ENCODE measurements at regions of chr14 and their contacts with region 1.

Region 1: DNA sequence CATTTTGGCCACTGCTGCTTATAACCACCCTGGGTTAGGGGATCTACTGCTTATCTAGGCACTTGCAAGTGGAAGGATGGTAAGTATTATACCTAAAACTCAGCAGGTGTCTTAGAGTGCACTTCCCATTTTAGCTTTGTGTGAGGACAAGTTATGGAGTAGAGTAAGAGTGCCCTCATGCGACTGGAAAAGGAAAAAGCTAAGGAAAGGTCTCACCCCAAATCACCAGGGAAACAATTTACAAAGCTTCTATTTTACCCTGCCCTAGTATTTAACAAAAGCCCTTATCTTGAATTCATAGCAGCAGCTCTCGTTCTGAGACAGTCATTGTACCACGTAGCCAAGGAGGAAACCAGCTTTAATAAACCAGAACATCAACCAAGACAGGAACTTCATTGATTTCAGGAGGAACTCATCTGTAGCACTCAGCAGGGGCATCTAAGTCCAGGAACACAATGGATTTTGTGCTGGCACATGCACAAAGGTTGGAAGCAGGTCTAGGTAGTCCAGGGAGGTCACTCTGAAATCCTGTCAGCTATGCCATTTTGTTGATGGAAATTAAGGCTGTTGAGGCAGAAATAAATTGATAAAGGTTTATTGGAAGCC is 2.9 kb downstream of the RDH12 start:
- DNase-seq: peak; percentile 79
- ATAC-seq: peak; percentile 88
- H3K4me3 ChIP-seq: no peak overlapping the region
- H3K27ac ChIP-seq: no peak overlapping the region
- H3K4me1 ChIP-seq: peaks cover 8% of the 10 kb centered on the region; the same call in 1 of the 2 replicates
- H3K27me3 ChIP-seq: no peaks in the 10 kb centered on the region
- CTCF ChIP-seq: peak; percentile 91

Region 2: GRCh38 chr14:67426983-67427606 is 277.5 kb before region 1 on chr14:
- CTCF ChIA-PET with region 1: interaction called, 12 read pairs
- POLR2A ChIA-PET with region 1: no interaction called
- intact Hi-C with region 1: loop called (anchors 1 kb)
- DNase-seq: peak; percentile 87
- ATAC-seq: peak; percentile 86
- H3K4me3 ChIP-seq: no peak overlapping the region
- H3K27ac ChIP-seq: no peak overlapping the region
- H3K4me1 ChIP-seq: peaks cover 8% of the 10 kb centered on the region
- H3K27me3 ChIP-seq: 0 out of 2 replicates have a peak, but pooled peaks cover under 1% of the 10 kb centered on the region
- CTCF ChIP-seq: peak; percentile 87

Region 3: DNA sequence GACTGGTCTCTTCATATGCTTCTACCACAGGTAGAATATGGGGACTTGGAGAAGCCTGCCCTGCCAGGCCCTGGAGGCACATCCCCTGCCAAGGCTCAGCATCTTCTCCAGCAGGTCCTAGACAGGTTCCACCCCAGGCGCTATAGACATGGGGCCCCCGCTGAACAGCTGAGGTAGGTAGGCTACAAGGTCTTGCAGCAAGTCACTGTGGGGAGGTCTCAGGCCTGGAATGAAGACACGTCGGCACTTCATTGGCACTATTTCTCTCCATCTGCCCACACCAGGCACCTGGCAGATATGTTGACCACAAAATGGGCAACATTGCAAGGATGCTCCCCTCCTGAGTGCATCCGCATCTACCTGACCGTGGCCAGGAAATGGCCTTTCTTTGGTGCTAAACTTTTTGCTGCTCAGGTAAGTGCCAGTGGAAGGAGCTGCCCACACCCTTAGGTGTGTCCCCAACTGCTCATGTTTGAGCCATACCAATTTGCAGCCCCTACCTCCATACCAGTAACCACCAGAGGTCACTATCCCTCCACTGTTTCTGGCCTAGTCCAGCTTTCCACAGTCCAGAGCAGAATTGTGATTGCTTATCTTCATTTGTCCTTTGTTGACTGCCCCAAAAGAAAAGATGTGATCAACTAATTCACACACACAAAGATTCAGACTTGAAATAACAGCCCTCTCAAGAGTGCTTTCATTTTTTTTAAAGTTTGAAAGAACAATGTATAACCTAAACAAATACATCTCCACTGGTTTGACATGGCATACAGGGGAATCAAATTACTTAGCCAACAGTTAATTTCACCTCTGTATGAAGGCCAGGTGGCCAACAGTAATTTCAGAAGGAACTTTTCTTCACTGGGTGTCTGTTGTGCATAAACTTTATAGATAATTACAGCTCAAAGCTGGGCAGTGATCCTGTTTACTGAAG is 120.6 kb before region 1 on chr14:
- CTCF ChIA-PET with region 1: interaction called, 68 read pairs
- POLR2A ChIA-PET with region 1: no interaction called
- intact Hi-C with region 1: loop called (anchors 1 kb)
- DNase-seq: peak; percentile 72
- ATAC-seq: peak; percentile 99
- H3K4me3 ChIP-seq: no peak overlapping the region
- H3K27ac ChIP-seq: no peak overlapping the region
- H3K4me1 ChIP-seq: no peaks in the 10 kb centered on the region
- H3K27me3 ChIP-seq: no peaks in the 10 kb centered on the region
- CTCF ChIP-seq: peak; percentile 93

Region 4: GRCh38 chr14:67619446-67620216 is 85.0 kb before region 1 on chr14 and contains the start of gene ARG2:
- CTCF ChIA-PET with region 1: interaction called, 70 read pairs
- POLR2A ChIA-PET with region 1: interaction called, 3 read pairs
- intact Hi-C with region 1: loop called (anchors 1 kb)
- DNase-seq: peak; percentile 95
- ATAC-seq: peak; percentile 84
- H3K4me3 ChIP-seq: peak within 1 kb of the TSS; percentile 77
- H3K27ac ChIP-seq: no peak within 1 kb of the TSS
- H3K4me1 ChIP-seq: peaks cover 31% of the 10 kb centered on the region
- H3K27me3 ChIP-seq: no peaks in the 10 kb centered on the region
- CTCF ChIP-seq: peak; percentile 32; the same call in 1 of the 2 replicates
- total RNA-seq, gene ARG2: 1.1 and 1.7 TPM in 2 replicates

Region 5: DNA sequence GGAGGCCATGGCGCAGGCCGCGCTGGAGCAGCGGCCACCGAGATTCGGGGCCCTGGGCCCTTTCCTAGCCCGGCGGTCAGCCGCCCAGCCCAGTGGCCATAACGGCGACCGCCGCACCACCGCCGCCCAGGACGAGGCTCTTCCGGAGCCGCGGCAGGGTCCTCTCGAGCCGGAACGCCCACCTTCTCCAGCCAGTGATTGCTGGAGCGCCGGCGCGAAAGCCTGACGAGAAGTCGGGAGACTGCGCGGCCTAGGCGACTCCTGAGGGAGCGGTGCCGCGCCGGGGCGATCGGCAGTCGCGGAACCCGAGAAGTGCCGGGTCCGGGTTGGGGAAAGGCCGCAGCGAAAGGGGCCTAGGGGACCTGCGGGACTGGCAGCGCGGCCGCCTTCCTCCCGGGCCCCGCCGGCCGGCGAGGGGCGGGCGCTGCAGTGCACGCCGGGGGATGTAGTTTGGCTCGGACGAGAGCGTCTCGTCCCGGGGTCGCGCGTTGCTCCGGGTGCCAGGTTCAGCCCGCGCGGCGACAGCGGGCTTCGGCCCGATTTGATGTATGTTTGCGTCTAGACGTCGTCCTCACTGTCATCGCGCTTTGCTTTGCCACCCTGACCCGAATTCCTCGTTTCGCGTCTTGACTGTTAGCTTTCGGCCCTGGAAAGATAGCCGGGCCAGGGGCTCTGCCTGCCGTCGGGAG is 30.0 kb before region 1 on chr14 and contains the start of gene VTI1B:
- CTCF ChIA-PET with region 1: interaction called, 13 read pairs
- POLR2A ChIA-PET with region 1: no interaction called
- intact Hi-C with region 1: loop called (anchors 1 kb)
- DNase-seq: peak; percentile 83
- ATAC-seq: peak; percentile 81
- H3K4me3 ChIP-seq: peak within 1 kb of the TSS; percentile 84
- H3K27ac ChIP-seq: peak within 1 kb of the TSS; percentile 80
- H3K4me1 ChIP-seq: peaks cover 19% of the 10 kb centered on the region
- H3K27me3 ChIP-seq: no peaks in the 10 kb centered on the region
- CTCF ChIP-seq: peak; percentile 30; the same call in 1 of the 2 replicates
- total RNA-seq, gene VTI1B: 72.6 and 93.8 TPM in 2 replicates